Ascending aorta (tissue), 2 donors: ENCODE measurements at regions of chr2 and their contacts with region 1.

Region 1: DNA sequence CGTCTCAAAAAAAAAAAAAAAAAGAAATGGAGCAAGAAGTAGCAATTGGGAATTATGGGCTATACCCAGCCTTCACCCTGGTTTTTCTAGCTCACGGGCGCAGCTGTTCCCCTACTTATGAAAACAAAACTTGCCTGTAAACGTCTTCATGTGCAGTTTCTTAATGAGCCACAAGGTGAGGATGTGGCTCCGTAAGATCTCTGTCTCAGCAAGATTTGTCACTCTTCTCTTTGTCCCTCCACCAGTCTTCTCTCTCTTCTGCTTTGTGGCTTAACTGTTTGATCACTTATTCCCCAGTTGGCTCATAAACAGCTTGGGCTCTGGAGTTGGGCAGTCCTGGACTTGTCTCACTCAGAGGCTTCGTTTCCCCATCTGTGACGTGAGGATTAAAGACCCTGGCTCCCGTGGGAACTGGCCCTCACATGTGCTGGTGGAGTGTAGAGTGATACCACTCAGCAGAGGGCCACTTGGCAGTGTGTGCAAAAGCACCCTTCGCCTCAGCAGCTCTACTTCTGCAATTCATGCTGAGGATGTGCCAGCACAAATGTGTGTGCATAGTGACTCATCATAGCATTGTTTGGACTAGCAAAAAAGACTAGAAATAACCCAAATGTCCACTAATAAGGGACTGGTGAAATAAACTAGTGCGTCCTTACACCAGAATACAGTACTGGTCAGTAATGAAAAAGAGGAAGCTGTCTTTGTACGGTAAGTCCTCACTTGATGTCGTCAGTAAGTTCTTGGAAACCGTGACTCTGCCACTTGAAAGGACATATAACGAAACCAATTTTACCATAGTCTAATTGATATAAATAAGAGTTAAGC is 8.7 kb downstream of the CEP68 start:
- DNase-seq: peak; percentile 66 to 92
- H3K4me3 ChIP-seq: peak overlapping the region; percentile 18 to 33
- H3K27ac ChIP-seq: peak overlapping the region; percentile 55 to 56
- H3K4me1 ChIP-seq: peaks cover 7 to 56% of the 10 kb centered on the region in 2 donors
- H3K27me3 ChIP-seq: no peaks in the 10 kb centered on the region
- CTCF ChIP-seq: peak; percentile 71 to 72 (median 72)

Region 2: GRCh38 chr2:64873472-64873924 is 191.4 kb before region 1 on chr2:
- intact Hi-C with region 1: no loop called
- DNase-seq: peak in 1 of 2 donors; percentile 90
- H3K4me3 ChIP-seq: peak overlapping the region; percentile 36 to 53
- H3K27ac ChIP-seq: no peak overlapping the region
- H3K4me1 ChIP-seq: peaks cover 0 to 17% of the 10 kb centered on the region in 2 donors
- H3K27me3 ChIP-seq: no peaks in the 10 kb centered on the region
- CTCF ChIP-seq: peak; percentile 92 to 97 (median 94)

Region 3: DNA sequence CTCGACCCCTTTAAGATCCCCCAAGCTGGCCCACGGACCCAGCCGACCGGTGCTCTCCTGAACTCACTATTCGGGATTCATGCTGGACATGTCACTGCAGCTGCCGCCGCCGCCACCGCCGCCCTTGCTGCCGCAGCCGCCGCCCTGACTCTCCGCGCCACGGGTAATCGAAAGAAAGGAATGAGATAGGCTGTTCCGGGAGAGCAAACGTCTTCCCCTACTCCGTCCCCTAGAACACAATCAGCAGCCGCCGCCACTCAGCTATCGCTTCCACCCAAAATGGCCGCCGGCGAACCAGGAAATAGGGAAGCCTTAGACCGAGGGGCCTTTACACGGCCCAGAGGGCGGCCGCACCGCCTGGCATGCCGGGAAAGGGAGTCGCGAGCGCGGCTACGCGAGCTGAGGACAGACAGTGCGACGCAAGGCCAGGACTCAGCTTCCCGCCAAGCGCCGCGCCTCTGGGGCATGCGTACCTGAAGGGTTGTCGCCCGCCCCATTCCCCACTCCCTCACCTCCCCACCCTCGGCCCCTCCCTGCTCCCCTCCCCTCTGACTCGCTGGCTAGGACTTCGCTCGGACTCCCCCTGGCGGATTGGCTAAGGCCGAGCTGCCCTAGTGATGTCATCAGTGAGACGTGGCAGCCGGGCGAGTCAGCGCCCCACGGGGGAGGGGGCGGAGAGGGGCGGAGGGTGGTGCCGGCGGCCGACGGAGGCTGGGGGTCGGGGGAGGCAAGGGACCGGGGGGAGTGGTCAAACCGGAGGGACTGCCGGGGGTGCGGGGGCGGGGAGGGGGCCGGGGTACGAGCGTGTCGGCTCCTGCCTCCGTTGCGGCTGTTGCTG is 65.1 kb after region 1 on chr2 and contains the start of gene RAB1A:
- intact Hi-C with region 1: loop called (anchors 2 kb)
- DNase-seq: peak; percentile 98 to 100
- H3K4me3 ChIP-seq: peak within 1 kb of the TSS; percentile 87 to 99
- H3K27ac ChIP-seq: peak within 1 kb of the TSS; percentile 98 to 99
- H3K4me1 ChIP-seq: peaks cover 14 to 29% of the 10 kb centered on the region in 2 donors
- H3K27me3 ChIP-seq: no peaks in the 10 kb centered on the region
- CTCF ChIP-seq: peak; percentile 13 to 50 (median 39)
- total RNA-seq, gene RAB1A: 56.4 TPM

Region 4: GRCh38 chr2:65165558-65165957 is 100.6 kb after region 1 on chr2:
- intact Hi-C with region 1: loop called (anchors 5 kb)
- DNase-seq: no peak
- H3K4me3 ChIP-seq: no peak overlapping the region
- H3K27ac ChIP-seq: peak overlapping the region; percentile 64 to 81
- H3K4me1 ChIP-seq: peaks cover 0 to 14% of the 10 kb centered on the region in 2 donors
- H3K27me3 ChIP-seq: no peaks in the 10 kb centered on the region
- CTCF ChIP-seq: no peak

Region 5: GRCh38 chr2:65186872-65187851 is 122.2 kb after region 1 on chr2:
- intact Hi-C with region 1: loop called (anchors 2 kb)
- DNase-seq: peak; percentile 38 to 87
- H3K4me3 ChIP-seq: no peak overlapping the region
- H3K27ac ChIP-seq: no peak overlapping the region
- H3K4me1 ChIP-seq: peaks cover 0 to 3% of the 10 kb centered on the region in 2 donors
- H3K27me3 ChIP-seq: no peaks in the 10 kb centered on the region
- CTCF ChIP-seq: peak; percentile 67 to 87 (median 80)

Region 6: GRCh38 chr2:65227425-65228262 is 162.7 kb after region 1 on chr2 and contains the start of gene ACTR2:
- intact Hi-C with region 1: loop called (anchors 2 kb)
- DNase-seq: peak; percentile 86 to 98
- H3K4me3 ChIP-seq: peak within 1 kb of the TSS; percentile 66 to 100
- H3K27ac ChIP-seq: peak within 1 kb of the TSS; percentile 89 to 100
- H3K4me1 ChIP-seq: peaks cover 3 to 36% of the 10 kb centered on the region in 2 donors
- H3K27me3 ChIP-seq: no peaks in the 10 kb centered on the region
- CTCF ChIP-seq: no peak
- total RNA-seq, gene ACTR2: 78.0 TPM